B cell (primary cell): ENCODE measurements at regions of chr4 and their contacts with region 1.

Region 1: DNA sequence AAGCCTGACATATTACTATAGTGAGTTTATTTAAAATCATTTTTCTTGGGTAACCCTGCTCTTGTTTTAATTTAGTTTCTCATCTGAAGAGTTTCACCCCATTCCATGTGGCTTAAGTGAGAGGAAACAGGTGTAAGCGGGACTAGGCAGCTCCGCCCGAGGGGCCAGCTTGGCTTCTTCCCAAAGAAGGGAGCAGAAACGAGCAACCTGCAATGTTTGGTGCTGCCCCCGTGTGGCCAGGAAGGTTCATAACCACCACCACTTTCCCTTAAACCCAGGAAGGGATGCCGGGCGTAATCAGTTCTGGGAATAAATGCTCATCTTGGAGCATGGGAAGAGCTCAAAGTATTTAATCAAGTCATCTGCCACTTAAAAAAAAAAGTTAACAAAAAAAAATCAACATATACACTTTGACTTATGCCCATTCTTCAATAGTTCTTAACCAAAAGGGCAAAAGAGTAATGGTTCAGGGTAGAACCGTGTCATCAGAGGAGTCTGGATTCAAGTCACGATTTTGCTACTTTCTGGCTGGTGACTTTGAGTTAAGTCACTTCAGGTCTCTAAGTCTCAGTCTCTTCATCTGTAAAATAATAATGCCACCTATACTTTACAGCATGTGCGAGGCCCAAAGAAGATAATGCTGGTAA is 147.9 kb downstream of the NSUN7 start:
- DNase-seq: peak; percentile 75
- ATAC-seq: peak; percentile 73
- H3K4me3 ChIP-seq: peak overlapping the region in 2 of 5 experiments; percentile 1 to 19
- H3K4me3 Mint-ChIP-seq: peak overlapping the region; percentile 75
- H3K27ac ChIP-seq: no peak overlapping the region
- H3K27ac Mint-ChIP-seq: peak overlapping the region; percentile 70
- H3K4me1 ChIP-seq: peaks cover 4 to 5% of the 10 kb centered on the region in 2 donors
- H3K4me1 Mint-ChIP-seq: peaks cover 7% of the 10 kb centered on the region
- H3K27me3 ChIP-seq: no peaks in the 10 kb centered on the region
- H3K27me3 Mint-ChIP-seq: no peaks in the 10 kb centered on the region
- CTCF ChIP-seq: peak; percentile 96

Region 2: GRCh38 chr4:40587823-40588222 is 309.9 kb before region 1 on chr4:
- CTCF ChIA-PET with region 1: no interaction called
- POLR2A ChIA-PET with region 1: no interaction called
- intact Hi-C with region 1: no loop called
- DNase-seq: no peak
- ATAC-seq: no peak
- H3K4me3 ChIP-seq: no peak overlapping the region
- H3K4me3 Mint-ChIP-seq: no peak overlapping the region
- H3K27ac ChIP-seq: no peak overlapping the region
- H3K27ac Mint-ChIP-seq: no peak overlapping the region
- H3K4me1 ChIP-seq: no peaks in the 10 kb centered on the region
- H3K4me1 Mint-ChIP-seq: peaks cover 2% of the 10 kb centered on the region
- H3K27me3 ChIP-seq: no peaks in the 10 kb centered on the region
- H3K27me3 Mint-ChIP-seq: no peaks in the 10 kb centered on the region
- CTCF ChIP-seq: no peak

Region 3: GRCh38 chr4:40736910-40737309 is 160.8 kb before region 1 on chr4:
- CTCF ChIA-PET with region 1: interaction called, 86 read pairs
- POLR2A ChIA-PET with region 1: no interaction called
- intact Hi-C with region 1: no loop called
- DNase-seq: peak; percentile 56
- ATAC-seq: no peak
- H3K4me3 ChIP-seq: no peak overlapping the region
- H3K4me3 Mint-ChIP-seq: no peak overlapping the region
- H3K27ac ChIP-seq: no peak overlapping the region
- H3K27ac Mint-ChIP-seq: no peak overlapping the region
- H3K4me1 ChIP-seq: peaks cover 0 to 2% of the 10 kb centered on the region in 2 donors
- H3K4me1 Mint-ChIP-seq: peaks cover 5% of the 10 kb centered on the region
- H3K27me3 ChIP-seq: no peaks in the 10 kb centered on the region
- H3K27me3 Mint-ChIP-seq: peaks cover 3% of the 10 kb centered on the region
- CTCF ChIP-seq: peak; percentile 57

Region 4: DNA sequence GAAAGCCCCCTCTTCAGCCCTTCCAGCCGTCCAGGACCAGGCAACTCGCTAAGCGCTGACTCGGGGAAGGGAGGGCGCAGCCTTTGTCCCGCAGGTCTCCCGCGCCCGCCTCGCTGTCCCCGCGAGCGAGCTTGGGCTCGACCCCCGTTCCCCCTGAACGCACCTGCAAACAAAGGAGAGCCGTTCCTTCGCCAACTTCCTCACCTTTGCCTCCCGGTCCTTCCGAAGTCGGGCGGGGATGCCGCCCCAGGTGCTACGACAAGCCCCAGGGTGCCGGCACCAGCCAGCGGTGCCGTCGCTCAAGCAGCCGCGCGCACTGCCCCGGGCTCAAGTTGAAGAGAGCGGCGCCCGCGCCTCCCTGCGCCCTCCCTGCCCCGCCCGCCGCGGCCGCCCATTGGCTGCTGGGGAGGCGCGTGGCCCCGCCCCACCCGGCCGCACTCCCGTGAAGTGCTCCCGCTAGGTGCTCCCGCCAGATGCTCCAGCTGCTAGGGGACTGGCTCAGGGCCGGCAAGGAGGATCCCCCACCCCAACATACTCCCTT is 40.8 kb before region 1 on chr4:
- CTCF ChIA-PET with region 1: interaction called, 13 read pairs
- POLR2A ChIA-PET with region 1: no interaction called
- intact Hi-C with region 1: no loop called
- DNase-seq: peak; percentile 78
- ATAC-seq: peak; percentile 95
- H3K4me3 ChIP-seq: peak overlapping the region; percentile 50 to 76 (median 69)
- H3K4me3 Mint-ChIP-seq: peak overlapping the region; percentile 88
- H3K27ac ChIP-seq: peak overlapping the region; percentile 40
- H3K27ac Mint-ChIP-seq: peak overlapping the region; percentile 76
- H3K4me1 ChIP-seq: peaks cover 19 to 32% of the 10 kb centered on the region in 2 donors
- H3K4me1 Mint-ChIP-seq: peaks cover 38% of the 10 kb centered on the region
- H3K27me3 ChIP-seq: peaks cover 0 to 19% (median 0%) of the 10 kb centered on the region in 4 experiments
- H3K27me3 Mint-ChIP-seq: peaks cover 20% of the 10 kb centered on the region
- CTCF ChIP-seq: no peak

Region 5: GRCh38 chr4:40887288-40888131 is 10.2 kb before region 1 on chr4:
- CTCF ChIA-PET with region 1: interaction called, 25 read pairs
- POLR2A ChIA-PET with region 1: no interaction called
- intact Hi-C with region 1: no loop called
- DNase-seq: no peak
- ATAC-seq: no peak
- H3K4me3 ChIP-seq: no peak overlapping the region
- H3K4me3 Mint-ChIP-seq: no peak overlapping the region
- H3K27ac ChIP-seq: no peak overlapping the region
- H3K27ac Mint-ChIP-seq: no peak overlapping the region
- H3K4me1 ChIP-seq: no peaks in the 10 kb centered on the region
- H3K4me1 Mint-ChIP-seq: no peaks in the 10 kb centered on the region
- H3K27me3 ChIP-seq: peaks cover 0 to 2% (median 0%) of the 10 kb centered on the region in 4 experiments
- H3K27me3 Mint-ChIP-seq: peaks cover 12% of the 10 kb centered on the region
- CTCF ChIP-seq: no peak

Region 6: DNA sequence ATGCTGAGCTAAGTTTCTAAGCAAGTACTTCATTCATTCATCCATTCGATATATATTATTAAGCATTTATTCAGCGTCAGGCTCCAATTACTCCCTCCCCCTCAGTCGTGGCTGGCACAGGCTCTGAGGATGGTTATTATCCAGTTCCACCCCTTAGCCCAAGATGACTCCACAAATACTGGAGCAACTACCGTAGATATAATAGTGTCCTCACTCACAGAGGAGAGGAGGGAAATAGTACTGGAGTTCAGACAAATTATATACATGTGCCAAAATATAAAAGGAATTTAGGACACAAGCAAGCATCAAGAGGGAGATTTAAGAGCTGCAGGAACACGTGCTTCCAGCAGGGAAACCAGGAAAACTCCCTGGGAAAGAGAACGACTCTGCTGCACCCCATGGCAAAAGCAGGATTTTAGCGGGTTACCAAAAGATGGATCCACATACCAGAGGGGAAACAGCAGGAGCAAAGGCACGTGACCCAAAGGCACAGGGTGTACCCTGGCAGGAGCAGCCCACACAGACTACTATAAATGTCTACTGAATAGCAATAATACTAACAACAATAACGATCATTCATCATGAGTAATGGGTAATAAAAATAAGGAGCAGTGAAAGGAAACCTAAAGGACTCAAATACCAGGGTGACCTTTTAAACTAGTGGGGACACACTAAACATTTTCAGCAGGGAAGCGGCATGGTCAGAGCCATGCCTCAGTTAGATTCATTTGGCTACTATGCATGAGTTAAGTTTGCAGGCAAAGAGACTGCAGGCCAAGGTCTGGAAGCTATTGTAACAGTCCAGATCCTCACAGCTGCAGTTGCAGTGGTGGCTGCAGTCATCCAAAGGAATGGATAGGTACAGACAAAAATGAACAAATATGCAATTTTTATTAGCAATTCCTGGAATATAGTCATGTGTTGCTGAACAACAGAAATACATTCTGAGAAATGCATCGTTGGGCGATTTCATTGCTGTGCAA is 163.0 kb after region 1 on chr4:
- CTCF ChIA-PET with region 1: no interaction called
- POLR2A ChIA-PET with region 1: no interaction called
- intact Hi-C with region 1: no loop called
- DNase-seq: no peak
- ATAC-seq: no peak
- H3K4me3 ChIP-seq: no peak overlapping the region
- H3K4me3 Mint-ChIP-seq: no peak overlapping the region
- H3K27ac ChIP-seq: no peak overlapping the region
- H3K27ac Mint-ChIP-seq: no peak overlapping the region
- H3K4me1 ChIP-seq: no peaks in the 10 kb centered on the region
- H3K4me1 Mint-ChIP-seq: no peaks in the 10 kb centered on the region
- H3K27me3 ChIP-seq: no peaks in the 10 kb centered on the region
- H3K27me3 Mint-ChIP-seq: peaks cover 3% of the 10 kb centered on the region
- CTCF ChIP-seq: no peak

Region 7: DNA sequence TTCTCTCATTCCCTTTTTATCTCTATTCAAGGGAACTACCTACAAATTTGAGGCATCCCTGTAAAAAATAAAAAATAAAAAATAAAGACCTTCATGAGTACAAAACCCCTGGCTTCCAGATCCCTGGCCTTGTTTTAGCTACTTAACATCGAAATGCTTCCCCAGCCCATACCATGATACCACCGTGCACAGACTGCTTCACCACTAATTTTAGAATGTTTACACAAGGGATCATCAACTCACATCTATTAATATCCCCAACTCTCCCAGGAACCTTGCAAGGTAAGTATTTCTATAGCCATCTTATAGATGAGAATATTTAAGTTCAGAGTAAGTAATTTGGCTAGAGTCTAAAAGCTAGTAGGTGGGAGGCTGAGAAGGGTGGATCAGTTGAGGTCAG is 410.7 kb after region 1 on chr4:
- CTCF ChIA-PET with region 1: no interaction called
- POLR2A ChIA-PET with region 1: no interaction called
- intact Hi-C with region 1: no loop called
- DNase-seq: no peak
- ATAC-seq: no peak
- H3K4me3 ChIP-seq: no peak overlapping the region
- H3K4me3 Mint-ChIP-seq: no peak overlapping the region
- H3K27ac ChIP-seq: no peak overlapping the region
- H3K27ac Mint-ChIP-seq: no peak overlapping the region
- H3K4me1 ChIP-seq: no peaks in the 10 kb centered on the region
- H3K4me1 Mint-ChIP-seq: no peaks in the 10 kb centered on the region
- H3K27me3 ChIP-seq: peaks cover 0 to 2% (median 0%) of the 10 kb centered on the region in 4 experiments
- H3K27me3 Mint-ChIP-seq: peaks cover 30% of the 10 kb centered on the region
- CTCF ChIP-seq: no peak